HCT116 (cell line): ENCODE measurements at regions of chr12 and their contacts with region 1.

Region 1: GRCh38 chr12:82627569-82628198 is 59.0 kb upstream of the TMTC2 start:
- DNase-seq: peak; percentile 26
- ATAC-seq: peak; percentile 82
- H3K4me3 ChIP-seq: no peak overlapping the region
- H3K27ac ChIP-seq: no peak overlapping the region
- H3K4me1 ChIP-seq: no peaks in the 10 kb centered on the region
- H3K27me3 ChIP-seq: no peaks in the 10 kb centered on the region
- CTCF ChIP-seq: peak; percentile 56 to 62 (median 62); a peak in 5 of 6 replicates
- POLR2A ChIP-seq: no peak
- RAD21 ChIP-seq: peak; percentile 87

Region 2: DNA sequence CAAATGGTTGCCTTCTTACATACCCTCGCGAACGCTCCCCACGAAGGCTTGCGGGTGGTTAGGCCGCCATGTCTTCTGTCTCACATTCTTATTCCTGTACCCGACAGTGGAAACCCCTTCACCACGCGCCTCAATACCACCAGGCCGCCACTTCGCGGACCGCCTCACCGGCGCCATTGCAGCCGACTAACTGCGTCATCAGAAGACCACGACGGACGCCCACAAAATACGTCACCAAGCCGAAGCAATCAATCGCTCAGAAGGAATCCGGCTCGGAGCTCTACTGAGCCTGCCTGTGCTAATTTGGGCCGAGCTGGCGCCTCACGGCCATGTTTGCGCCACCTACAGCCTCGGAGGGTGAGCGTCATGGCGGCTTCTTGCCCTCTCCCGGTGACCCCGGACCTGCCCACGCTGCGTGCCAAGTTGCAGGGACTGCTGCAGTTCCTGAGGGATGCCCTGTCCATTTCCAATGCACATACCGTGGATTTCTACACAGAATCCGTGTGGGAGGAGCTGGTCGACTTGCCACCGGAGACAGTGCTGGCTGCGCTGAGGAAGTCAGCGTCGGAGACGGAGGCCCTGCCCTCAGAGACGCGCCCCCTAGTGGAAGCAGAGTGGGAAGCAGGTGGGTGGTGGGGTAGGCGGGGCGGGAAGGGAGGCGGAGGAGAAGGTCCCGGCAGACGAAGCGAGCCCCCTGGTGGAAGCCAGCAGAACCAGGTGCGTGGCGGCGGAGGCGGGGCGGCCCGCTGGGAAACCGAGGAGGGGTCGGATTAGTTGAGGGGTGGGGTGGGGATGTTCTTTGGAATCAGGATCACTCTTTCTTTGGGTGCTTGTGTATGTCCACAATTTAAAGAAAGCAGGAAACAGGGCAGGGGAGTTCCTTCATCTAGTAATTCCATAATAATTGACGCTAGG is 269.2 kb before region 1 on chr12 and contains the starts of genes CCDC59 and METTL25:
- CTCF ChIA-PET with region 1: interaction called, 4 read pairs
- POLR2A ChIA-PET with region 1: no interaction called
- RAD21 ChIA-PET with region 1: no interaction called
- intact Hi-C with region 1: loop called (anchors 10 kb)
- DNase-seq: peak; percentile 97
- ATAC-seq: peak; percentile 95
- H3K4me3 ChIP-seq: peak within 1 kb of the TSS; percentile 84 to 88
- H3K27ac ChIP-seq: peak within 1 kb of the TSS; percentile 65
- H3K4me1 ChIP-seq: peaks cover 3 to 15% of the 10 kb centered on the region in 2 experiments; a peak in 3 of 4 replicates
- H3K27me3 ChIP-seq: no peaks in the 10 kb centered on the region
- CTCF ChIP-seq: peak; percentile 82 to 99 (median 89)
- POLR2A ChIP-seq: peak; percentile 63
- RAD21 ChIP-seq: peak; percentile 29; the same call in 1 of the 2 replicates
- total RNA-seq, gene CCDC59: 76.6 TPM
- total RNA-seq, gene METTL25: 4.4 TPM

Region 3: GRCh38 chr12:82383930-82384552 is 243.6 kb before region 1 on chr12:
- CTCF ChIA-PET with region 1: interaction called, 4 read pairs
- POLR2A ChIA-PET with region 1: no interaction called
- RAD21 ChIA-PET with region 1: no interaction called
- intact Hi-C with region 1: loop called (anchors 2 kb)
- DNase-seq: no peak
- ATAC-seq: peak; percentile 75
- H3K4me3 ChIP-seq: no peak overlapping the region
- H3K27ac ChIP-seq: no peak overlapping the region
- H3K4me1 ChIP-seq: no peaks in the 10 kb centered on the region
- H3K27me3 ChIP-seq: no peaks in the 10 kb centered on the region
- CTCF ChIP-seq: peak; percentile 32 to 60 (median 53); a peak in 5 of 6 replicates
- POLR2A ChIP-seq: no peak
- RAD21 ChIP-seq: peak; percentile 70

Region 4: GRCh38 chr12:82685790-82686167 is 58.1 kb after region 1 on chr12:
- CTCF ChIA-PET with region 1: no interaction called
- POLR2A ChIA-PET with region 1: no interaction called
- RAD21 ChIA-PET with region 1: no interaction called
- intact Hi-C with region 1: no loop called
- DNase-seq: peak; percentile 86
- ATAC-seq: peak; percentile 69
- H3K4me3 ChIP-seq: peak overlapping the region; percentile 68 to 69
- H3K27ac ChIP-seq: peak overlapping the region; percentile 80
- H3K4me1 ChIP-seq: peaks cover 4 to 18% of the 10 kb centered on the region in 2 experiments; a peak in 3 of 4 replicates
- H3K27me3 ChIP-seq: no peaks in the 10 kb centered on the region
- CTCF ChIP-seq: peak; percentile 80 to 89 (median 82)
- POLR2A ChIP-seq: no peak
- RAD21 ChIP-seq: peak; percentile 95

Region 5: GRCh38 chr12:82952946-82953345 is 325.3 kb after region 1 on chr12:
- CTCF ChIA-PET with region 1: no interaction called
- POLR2A ChIA-PET with region 1: no interaction called
- RAD21 ChIA-PET with region 1: no interaction called
- intact Hi-C with region 1: no loop called
- DNase-seq: no peak
- ATAC-seq: no peak
- H3K4me3 ChIP-seq: no peak overlapping the region
- H3K27ac ChIP-seq: no peak overlapping the region
- H3K4me1 ChIP-seq: no peaks in the 10 kb centered on the region
- H3K27me3 ChIP-seq: no peaks in the 10 kb centered on the region
- CTCF ChIP-seq: no peak
- POLR2A ChIP-seq: no peak
- RAD21 ChIP-seq: no peak